Caco-2 (cell line): ENCODE measurements at regions of chr5 and their contacts with region 1.

Region 1: GRCh38 chr5:119088438-119088837 is 17.6 kb downstream of the DMXL1 start:
- DNase-seq: no peak
- H3K4me3 ChIP-seq: no peak overlapping the region
- H3K4me3 Mint-ChIP-seq: no peak overlapping the region
- H3K27ac Mint-ChIP-seq: no peak overlapping the region
- H3K4me1 ChIP-seq: no peaks in the 10 kb centered on the region
- H3K4me1 Mint-ChIP-seq: no peaks in the 10 kb centered on the region
- H3K27me3 ChIP-seq: no peaks in the 10 kb centered on the region
- H3K27me3 Mint-ChIP-seq: no peaks in the 10 kb centered on the region
- CTCF ChIP-seq: no peak

Region 2: GRCh38 chr5:119070828-119071572 is 17.4 kb before region 1 on chr5 and contains the start of gene DMXL1:
- CTCF ChIA-PET with region 1: no interaction called
- POLR2A ChIA-PET with region 1: interaction called, 11 read pairs
- intact Hi-C with region 1: no loop called
- DNase-seq: peak; percentile 99 to 100
- H3K4me3 ChIP-seq: peak within 1 kb of the TSS; percentile 86
- H3K4me3 Mint-ChIP-seq: peak within 1 kb of the TSS; percentile 86
- H3K27ac Mint-ChIP-seq: peak within 1 kb of the TSS; percentile 96
- H3K4me1 ChIP-seq: no peaks in the 10 kb centered on the region
- H3K4me1 Mint-ChIP-seq: peaks cover 6% of the 10 kb centered on the region
- H3K27me3 ChIP-seq: no peaks in the 10 kb centered on the region
- H3K27me3 Mint-ChIP-seq: no peaks in the 10 kb centered on the region
- CTCF ChIP-seq: no peak
- total RNA-seq, gene DMXL1: 30.0 and 33.1 TPM in 2 replicates